ENCODE measurements at regions of chr11 and their contacts with region 1.

Region 1: GRCh38 chr11:117316197-117316961 is at the start of gene BACE1:
- DNase-seq: peak; percentile 91
- ATAC-seq: peak; percentile 99
- H3K4me3 Mint-ChIP-seq: peak within 1 kb of the TSS; percentile 71
- H3K27ac Mint-ChIP-seq: no peak within 1 kb of the TSS; the same call in 1 of the 2 replicates
- H3K4me1 Mint-ChIP-seq: peaks cover 17% of the 10 kb centered on the region
- H3K27me3 Mint-ChIP-seq: peaks cover 2% of the 10 kb centered on the region
- CTCF ChIP-seq: no peak
- total RNA-seq, gene BACE1: 8.5 to 9.2 TPM (median 8.7 TPM) in 3 replicates

Region 2: GRCh38 chr11:117205211-117205818 is 111.1 kb before region 1 on chr11:
- CTCF ChIA-PET with region 1: no interaction called
- POLR2A ChIA-PET with region 1: no interaction called
- DNase-seq: peak; percentile 38
- ATAC-seq: peak; percentile 11
- H3K4me3 Mint-ChIP-seq: no peak overlapping the region
- H3K27ac Mint-ChIP-seq: no peak overlapping the region
- H3K4me1 Mint-ChIP-seq: peaks cover 9% of the 10 kb centered on the region
- H3K27me3 Mint-ChIP-seq: no peaks in the 10 kb centered on the region; the same call in 1 of the 2 replicates
- CTCF ChIP-seq: no peak

Region 3: GRCh38 chr11:117273550-117274289 is 42.7 kb before region 1 on chr11:
- CTCF ChIA-PET with region 1: no interaction called
- POLR2A ChIA-PET with region 1: no interaction called
- DNase-seq: no peak
- ATAC-seq: peak; percentile 36
- H3K4me3 Mint-ChIP-seq: no peak overlapping the region
- H3K27ac Mint-ChIP-seq: 0 out of 2 replicates have a peak overlapping the region, but pooled peaks have one; percentile 2
- H3K4me1 Mint-ChIP-seq: no peaks in the 10 kb centered on the region
- H3K27me3 Mint-ChIP-seq: peaks cover 2% of the 10 kb centered on the region; the same call in 1 of the 2 replicates
- CTCF ChIP-seq: no peak

Region 4: DNA sequence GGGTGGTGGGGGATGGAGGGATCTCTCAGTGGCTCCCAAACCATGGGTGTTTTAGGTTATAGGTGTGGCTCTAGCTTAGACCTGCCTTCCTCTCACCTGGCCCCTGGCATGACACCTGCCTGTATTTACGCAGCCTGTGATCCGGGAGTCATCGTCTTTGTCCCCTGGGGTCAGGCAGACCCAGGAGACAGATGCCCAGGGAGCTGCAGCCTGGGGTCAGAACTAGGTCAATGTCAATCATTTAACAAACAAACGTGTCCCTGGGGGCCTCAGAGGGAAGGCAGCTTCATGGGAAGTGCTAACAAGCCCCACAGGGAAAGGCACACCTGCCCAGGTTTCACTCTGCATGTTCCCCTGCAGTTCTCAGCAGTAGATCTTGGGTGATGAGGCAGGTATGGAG is 13.3 kb before region 1 on chr11:
- CTCF ChIA-PET with region 1: interaction called, 10 read pairs
- POLR2A ChIA-PET with region 1: no interaction called
- DNase-seq: no peak
- ATAC-seq: no peak
- H3K4me3 Mint-ChIP-seq: no peak overlapping the region
- H3K27ac Mint-ChIP-seq: no peak overlapping the region
- H3K4me1 Mint-ChIP-seq: peaks cover 35% of the 10 kb centered on the region
- H3K27me3 Mint-ChIP-seq: peaks cover 4% of the 10 kb centered on the region; the same call in 1 of the 2 replicates
- CTCF ChIP-seq: no peak

Region 5: GRCh38 chr11:117327567-117328374 is 11.4 kb after region 1 on chr11 and contains the start of gene CEP164:
- CTCF ChIA-PET with region 1: interaction called, 14 read pairs
- POLR2A ChIA-PET with region 1: interaction called, 5 read pairs
- DNase-seq: peak; percentile 93
- ATAC-seq: peak; percentile 97
- H3K4me3 Mint-ChIP-seq: no peak within 1 kb of the TSS
- H3K27ac Mint-ChIP-seq: no peak within 1 kb of the TSS; the same call in 1 of the 2 replicates
- H3K4me1 Mint-ChIP-seq: no peaks in the 10 kb centered on the region
- H3K27me3 Mint-ChIP-seq: no peaks in the 10 kb centered on the region; the same call in 1 of the 2 replicates
- CTCF ChIP-seq: no peak
- total RNA-seq, gene CEP164: 21.0 to 23.5 TPM (median 21.8 TPM) in 3 replicates